Heart left ventricle (tissue), 16 donors: ENCODE measurements at regions of chr12 and their contacts with region 1.

Region 1: GRCh38 chr12:42589465-42590329 is at the start of gene PRICKLE1:
- DNase-seq: peak; percentile 43 to 73 (median 56)
- ATAC-seq: peak; percentile 47 to 85 (median 68)
- H3K4me3 ChIP-seq: peak within 1 kb of the TSS; percentile 74 to 98 (median 87)
- H3K27ac ChIP-seq: peak within 1 kb of the TSS in 11 of 12 donors; percentile 40 to 90 (median 84)
- H3K4me1 ChIP-seq: peaks cover 0 to 38% (median 21%) of the 10 kb centered on the region in 12 donors
- H3K27me3 ChIP-seq: peaks cover 0 to 33% (median 0%) of the 10 kb centered on the region in 9 donors
- CTCF ChIP-seq: no peak
- POLR2A ChIP-seq: peak in 1 of 2 donors; percentile 20
- total RNA-seq, gene PRICKLE1: 15.5 to 39.2 (median 21.1) TPM

Region 2: GRCh38 chr12:42669471-42669992 is 79.8 kb after region 1 on chr12:
- intact Hi-C with region 1: no loop called
- DNase-seq: no peak
- ATAC-seq: no peak
- H3K4me3 ChIP-seq: no peak overlapping the region
- H3K27ac ChIP-seq: no peak overlapping the region
- H3K4me1 ChIP-seq: peaks cover 0 to 8% (median 0%) of the 10 kb centered on the region in 12 donors
- H3K27me3 ChIP-seq: no peaks in the 10 kb centered on the region
- CTCF ChIP-seq: no peak
- POLR2A ChIP-seq: no peak

Region 3: DNA sequence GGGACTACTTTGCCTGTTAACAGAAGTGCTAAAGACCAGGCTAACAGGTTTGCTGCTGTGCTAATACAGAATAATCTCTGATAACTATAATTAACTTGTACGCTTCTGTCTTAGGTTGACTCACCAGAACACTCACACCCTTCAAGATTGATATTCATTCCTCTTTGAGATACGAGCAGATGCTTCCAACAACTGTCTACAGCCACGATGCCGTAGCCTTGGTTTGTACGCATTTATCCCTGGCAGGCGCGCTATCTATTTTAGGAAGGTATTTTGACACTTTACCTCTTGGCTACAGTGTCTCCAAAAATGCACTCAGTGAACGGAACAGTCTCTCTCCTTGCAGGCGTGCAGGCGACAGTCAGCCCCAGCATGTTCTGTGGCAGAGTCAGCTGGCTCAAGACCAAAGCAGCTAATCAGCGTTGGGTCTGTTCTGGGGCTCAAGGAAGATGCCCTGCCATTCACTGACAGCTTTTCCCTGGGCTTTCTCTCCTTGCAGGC is 146.2 kb after region 1 on chr12:
- intact Hi-C with region 1: loop called in 2 of 10 experiments (anchors 5 kb)
- DNase-seq: peak; percentile 57 to 90 (median 77)
- ATAC-seq: peak; percentile 94 to 96 (median 96)
- H3K4me3 ChIP-seq: peak overlapping the region in 6 of 12 donors; percentile 13 to 48 (median 32)
- H3K27ac ChIP-seq: peak overlapping the region; percentile 9 to 91 (median 70)
- H3K4me1 ChIP-seq: peaks cover 0 to 32% (median 10%) of the 10 kb centered on the region in 12 donors
- H3K27me3 ChIP-seq: no peaks in the 10 kb centered on the region
- CTCF ChIP-seq: no peak
- POLR2A ChIP-seq: no peak

Region 4: GRCh38 chr12:42790761-42791151 is 201.1 kb after region 1 on chr12:
- intact Hi-C with region 1: loop called in 1 of 10 experiments (anchors 10 kb)
- DNase-seq: no peak
- ATAC-seq: peak in 1 of 4 donors; percentile 56
- H3K4me3 ChIP-seq: no peak overlapping the region
- H3K27ac ChIP-seq: peak overlapping the region in 1 of 12 donors; percentile 49
- H3K4me1 ChIP-seq: peaks cover 0 to 17% (median 2%) of the 10 kb centered on the region in 12 donors
- H3K27me3 ChIP-seq: no peaks in the 10 kb centered on the region
- CTCF ChIP-seq: no peak
- POLR2A ChIP-seq: no peak

Region 5: DNA sequence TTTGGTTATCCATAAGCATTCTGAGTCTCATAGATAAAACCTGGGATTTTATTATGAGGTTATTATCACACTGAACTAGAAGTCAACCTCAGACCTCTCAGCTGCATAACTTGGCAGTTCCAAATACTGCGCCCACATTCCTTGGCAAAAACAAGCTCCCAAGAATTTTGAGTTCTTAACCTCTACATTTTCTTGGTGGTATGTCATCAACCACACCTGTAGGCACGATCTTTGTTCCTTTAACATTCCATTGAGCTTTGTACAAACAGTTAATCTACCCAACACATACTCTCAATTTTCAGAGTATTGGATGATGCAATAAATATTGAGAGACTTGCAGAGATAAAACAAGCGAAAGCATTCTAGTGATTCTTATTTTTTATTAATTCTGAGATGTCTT is 371.7 kb after region 1 on chr12:
- intact Hi-C with region 1: loop called in 1 of 10 experiments (anchors 10 kb)
- DNase-seq: no peak
- ATAC-seq: peak in 2 of 4 donors; percentile 16 to 22
- H3K4me3 ChIP-seq: no peak overlapping the region
- H3K27ac ChIP-seq: no peak overlapping the region
- H3K4me1 ChIP-seq: peaks cover 0 to 36% (median 7%) of the 10 kb centered on the region in 12 donors
- H3K27me3 ChIP-seq: no peaks in the 10 kb centered on the region
- CTCF ChIP-seq: no peak
- POLR2A ChIP-seq: no peak

Region 6: DNA sequence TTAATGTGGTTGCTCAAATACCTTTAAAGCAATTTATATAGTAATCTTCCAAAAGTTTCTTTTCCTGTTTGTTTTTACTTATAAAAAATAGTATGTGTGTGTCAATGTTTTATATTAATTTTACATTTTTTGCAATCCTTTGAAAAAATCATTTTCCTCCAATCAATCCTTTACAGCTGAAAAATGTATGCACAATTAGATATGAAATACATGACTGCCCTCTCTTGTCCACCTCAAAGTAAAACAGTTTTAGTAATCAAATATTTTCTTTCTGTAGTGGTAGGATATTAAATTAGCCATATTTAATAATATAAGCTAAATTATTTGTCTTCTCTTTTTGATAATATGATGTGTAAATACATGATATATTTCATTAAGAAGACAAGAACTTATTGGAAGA is 692.4 kb after region 1 on chr12:
- intact Hi-C with region 1: loop called (anchors 2 to 10 kb)
- DNase-seq: no peak
- ATAC-seq: no peak
- H3K4me3 ChIP-seq: no peak overlapping the region
- H3K27ac ChIP-seq: no peak overlapping the region
- H3K4me1 ChIP-seq: peaks cover 0 to 21% (median 0%) of the 10 kb centered on the region in 12 donors
- H3K27me3 ChIP-seq: no peaks in the 10 kb centered on the region
- CTCF ChIP-seq: peak in 10 of 12 donors; percentile 10 to 65 (median 50)
- POLR2A ChIP-seq: no peak